Activated B cell treated with CpG ODN at 0.5 μM for 24 hours (primary cell): ENCODE measurements at regions of chr6 and their contacts with region 1.

Region 1: GRCh38 chr6:38671885-38672467 is 31.0 kb downstream of the GLO1 start:
- DNase-seq: no peak
- ATAC-seq: peak; percentile 66
- H3K4me3 Mint-ChIP-seq: no peak overlapping the region
- H3K27ac Mint-ChIP-seq: no peak overlapping the region
- H3K4me1 Mint-ChIP-seq: peaks cover 41% of the 10 kb centered on the region
- H3K27me3 Mint-ChIP-seq: no peaks in the 10 kb centered on the region
- CTCF ChIP-seq: no peak

Region 2: DNA sequence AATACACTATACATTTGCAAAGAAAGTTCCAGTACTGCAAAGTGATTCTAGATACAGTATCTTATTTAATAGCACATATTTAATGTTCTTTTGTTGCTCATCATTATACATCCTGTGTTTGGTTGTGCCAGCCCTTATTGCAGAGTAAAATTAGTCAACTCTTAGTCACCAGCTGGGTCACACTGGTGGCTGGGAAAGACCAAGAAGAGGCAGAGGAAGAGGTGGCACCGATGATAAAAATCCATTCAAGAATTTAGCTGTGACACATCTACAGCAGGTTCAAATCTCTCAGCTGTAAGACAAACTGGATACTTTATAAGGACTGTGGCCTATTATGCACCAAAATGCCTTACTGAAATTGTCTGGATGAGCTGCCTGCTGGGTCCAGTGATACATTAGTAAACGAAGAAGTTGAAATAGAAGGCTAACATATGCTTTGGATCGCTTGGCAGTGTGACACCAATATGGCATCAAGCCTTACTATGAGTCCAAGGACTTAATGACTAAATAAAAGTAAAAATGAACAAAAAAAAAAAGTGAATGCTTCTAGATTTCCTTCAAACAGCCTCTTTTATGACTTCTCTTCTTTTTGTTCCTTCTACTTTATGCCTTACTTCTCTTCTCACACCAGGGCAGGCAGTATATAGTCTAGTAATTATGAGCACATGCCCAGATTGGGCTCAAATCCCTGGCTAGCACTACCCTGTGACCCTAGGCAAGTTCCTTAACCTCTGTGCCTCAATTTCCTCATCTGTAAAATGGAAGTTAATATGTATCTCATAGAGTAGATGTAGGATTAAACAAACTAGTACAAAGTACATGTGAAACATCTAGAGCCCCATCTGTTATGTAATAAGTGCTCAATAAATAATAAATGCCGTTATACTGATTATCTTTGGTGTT is 1347.6 kb before region 1 on chr6:
- CTCF ChIA-PET with region 1: no interaction called
- POLR2A ChIA-PET with region 1: no interaction called
- intact Hi-C with region 1: loop called (anchors 2 kb)
- DNase-seq: no peak
- ATAC-seq: no peak
- H3K4me3 Mint-ChIP-seq: no peak overlapping the region
- H3K27ac Mint-ChIP-seq: no peak overlapping the region
- H3K4me1 Mint-ChIP-seq: peaks cover 2% of the 10 kb centered on the region
- H3K27me3 Mint-ChIP-seq: no peaks in the 10 kb centered on the region
- CTCF ChIP-seq: no peak

Region 3: GRCh38 chr6:37705239-37706051 is 966.5 kb before region 1 on chr6:
- CTCF ChIA-PET with region 1: no interaction called
- POLR2A ChIA-PET with region 1: no interaction called
- intact Hi-C with region 1: loop called (anchors 5 kb)
- DNase-seq: peak; percentile 72
- ATAC-seq: peak; percentile 91
- H3K4me3 Mint-ChIP-seq: peak overlapping the region; percentile 86
- H3K27ac Mint-ChIP-seq: peak overlapping the region; percentile 71
- H3K4me1 Mint-ChIP-seq: peaks cover 24% of the 10 kb centered on the region
- H3K27me3 Mint-ChIP-seq: no peaks in the 10 kb centered on the region
- CTCF ChIP-seq: no peak

Region 4: DNA sequence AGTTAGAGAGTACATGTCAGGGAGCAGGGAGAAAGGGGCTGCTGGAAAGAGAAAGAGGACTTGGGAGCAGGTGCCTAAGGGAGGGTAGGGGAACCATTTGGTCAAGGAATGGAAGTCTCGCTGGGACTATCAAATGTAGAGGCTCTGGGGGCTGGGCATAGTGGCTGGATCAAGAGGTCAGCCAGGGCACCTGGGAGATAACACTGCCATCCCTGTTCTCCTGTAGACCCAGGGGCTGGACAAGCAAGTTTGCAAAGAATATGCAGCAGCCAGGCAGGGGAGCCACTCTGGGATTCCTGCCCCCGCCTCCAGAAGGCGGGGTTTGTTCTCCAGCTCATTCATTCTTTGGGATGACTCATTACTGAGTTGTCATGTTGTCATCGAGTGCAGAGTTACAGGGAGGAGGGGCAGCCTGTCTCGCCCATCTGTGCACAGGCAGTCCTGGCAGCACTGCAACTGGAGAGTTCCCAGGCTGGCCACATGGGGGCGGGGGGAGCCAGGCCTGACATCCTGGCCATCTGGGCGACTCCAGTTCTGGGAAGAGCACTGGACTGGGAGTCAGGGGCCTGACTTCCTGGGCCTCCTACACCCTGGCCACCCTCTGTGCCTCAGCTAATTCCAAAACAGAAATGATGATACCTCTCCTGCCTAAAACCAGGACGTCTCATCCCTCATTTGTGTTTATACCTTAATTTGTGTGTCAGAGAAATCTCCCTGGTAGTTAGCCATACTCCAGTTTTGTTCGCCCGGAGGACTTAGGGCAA is 880.6 kb before region 1 on chr6:
- CTCF ChIA-PET with region 1: no interaction called
- POLR2A ChIA-PET with region 1: no interaction called
- intact Hi-C with region 1: loop called (anchors 5 kb)
- DNase-seq: peak; percentile 66
- ATAC-seq: peak; percentile 100
- H3K4me3 Mint-ChIP-seq: no peak overlapping the region
- H3K27ac Mint-ChIP-seq: no peak overlapping the region
- H3K4me1 Mint-ChIP-seq: peaks cover 7% of the 10 kb centered on the region
- H3K27me3 Mint-ChIP-seq: no peaks in the 10 kb centered on the region
- CTCF ChIP-seq: peak; percentile 73

Region 5: DNA sequence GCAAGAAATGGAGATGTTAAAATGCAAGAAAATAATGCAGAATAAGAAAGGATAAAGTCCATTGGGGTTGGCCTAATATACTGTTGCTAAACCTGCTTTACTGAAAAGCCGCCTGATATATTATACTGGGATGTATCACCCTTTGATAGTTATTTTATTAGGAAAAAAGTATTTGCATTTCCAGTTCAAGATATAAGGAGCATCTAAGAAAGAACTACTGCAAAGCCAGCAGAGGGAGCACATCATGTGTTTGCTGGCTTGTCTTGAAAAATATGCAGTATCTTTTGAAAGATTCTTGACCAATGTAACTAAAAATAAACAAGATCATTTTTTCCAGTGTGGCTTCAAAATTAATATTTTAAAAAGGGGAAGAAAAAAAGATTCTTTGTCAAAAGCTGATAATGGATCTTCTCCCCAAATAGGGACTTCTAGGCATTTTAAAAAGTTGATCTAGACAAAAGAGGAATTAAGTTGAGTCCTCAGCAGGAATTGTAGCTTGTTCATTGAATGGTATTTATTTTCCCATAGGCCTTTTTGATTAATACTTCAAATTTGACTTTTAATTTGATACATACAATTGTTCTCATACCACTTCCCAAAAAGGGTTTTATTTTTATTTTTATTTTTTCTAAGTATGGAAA is 637.6 kb before region 1 on chr6:
- CTCF ChIA-PET with region 1: interaction called, 3 read pairs
- POLR2A ChIA-PET with region 1: no interaction called
- intact Hi-C with region 1: loop called (anchors 10 kb)
- DNase-seq: no peak
- ATAC-seq: no peak
- H3K4me3 Mint-ChIP-seq: no peak overlapping the region
- H3K27ac Mint-ChIP-seq: no peak overlapping the region
- H3K4me1 Mint-ChIP-seq: peaks cover 38% of the 10 kb centered on the region
- H3K27me3 Mint-ChIP-seq: no peaks in the 10 kb centered on the region
- CTCF ChIP-seq: no peak

Region 6: GRCh38 chr6:38612143-38612965 is 59.6 kb before region 1 on chr6:
- CTCF ChIA-PET with region 1: no interaction called
- POLR2A ChIA-PET with region 1: no interaction called
- intact Hi-C with region 1: no loop called
- DNase-seq: no peak
- ATAC-seq: no peak
- H3K4me3 Mint-ChIP-seq: no peak overlapping the region
- H3K27ac Mint-ChIP-seq: no peak overlapping the region
- H3K4me1 Mint-ChIP-seq: peaks cover 19% of the 10 kb centered on the region
- H3K27me3 Mint-ChIP-seq: no peaks in the 10 kb centered on the region
- CTCF ChIP-seq: no peak

Region 7: DNA sequence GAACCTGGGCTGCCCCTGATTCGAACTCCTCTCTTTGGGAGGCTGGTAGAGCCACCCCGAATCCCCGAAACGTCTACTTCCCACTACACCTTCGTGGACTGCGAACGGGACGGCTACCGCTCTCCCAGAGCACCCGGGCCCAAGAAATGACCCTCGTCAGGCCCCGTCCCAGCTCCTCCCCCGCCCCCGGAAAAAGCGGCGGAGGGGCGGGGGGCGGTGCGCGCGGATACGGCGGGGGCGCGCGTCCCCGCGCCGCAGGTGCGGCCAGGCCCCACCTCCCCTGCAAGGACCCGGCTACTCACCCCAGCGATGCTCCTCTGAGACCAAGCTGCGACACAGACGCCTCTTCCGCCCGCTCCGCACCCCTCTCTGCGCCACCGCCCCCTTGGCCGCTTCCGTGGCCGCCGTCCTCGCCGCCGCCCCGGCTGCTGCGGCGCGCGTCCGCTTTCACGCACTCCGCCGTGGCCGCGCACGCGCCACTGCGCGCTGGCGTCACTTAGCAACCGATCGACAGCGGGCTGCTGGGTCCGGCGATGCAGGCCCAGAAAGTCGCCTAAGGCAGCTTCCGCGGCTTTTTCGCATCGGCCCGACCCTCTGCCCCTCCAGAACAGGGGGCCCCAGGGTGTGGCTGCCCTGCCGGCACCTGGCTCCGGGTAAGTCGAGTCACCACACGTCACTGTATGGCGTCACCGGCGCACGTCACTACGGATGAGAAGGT is 32.3 kb before region 1 on chr6 and contains the start of gene BTBD9:
- CTCF ChIA-PET with region 1: no interaction called
- POLR2A ChIA-PET with region 1: interaction called, 4 read pairs
- intact Hi-C with region 1: loop called (anchors 2 kb)
- DNase-seq: peak; percentile 92
- ATAC-seq: peak; percentile 86
- H3K4me3 Mint-ChIP-seq: peak within 1 kb of the TSS; percentile 94
- H3K27ac Mint-ChIP-seq: peak within 1 kb of the TSS; percentile 95
- H3K4me1 Mint-ChIP-seq: peaks cover 31% of the 10 kb centered on the region
- H3K27me3 Mint-ChIP-seq: no peaks in the 10 kb centered on the region
- CTCF ChIP-seq: no peak
- total RNA-seq, gene BTBD9: 19.4 and 25.7 TPM in 2 replicates